ENCODE measurements at regions of chr10 and their contacts with region 1.

Region 1: GRCh38 chr10:103888113-103888841 is 29.7 kb downstream of the STN1 start:
- DNase-seq: peak; percentile 60
- ATAC-seq: peak; percentile 61

Region 2: GRCh38 chr10:103990121-103990520 is 101.8 kb after region 1 on chr10:
- intact Hi-C with region 1: loop called (anchors 10 kb)
- DNase-seq: no peak
- ATAC-seq: no peak

Region 3: GRCh38 chr10:104121520-104122224 is 233.4 kb after region 1 on chr10 and contains the start of gene SFR1:
- intact Hi-C with region 1: loop called (anchors 5 kb)
- DNase-seq: peak; percentile 100
- ATAC-seq: peak; percentile 97
- total RNA-seq, gene SFR1: 5.2 TPM

Region 4: GRCh38 chr10:104209575-104210198 is 321.4 kb after region 1 on chr10:
- intact Hi-C with region 1: loop called (anchors 5 kb)
- DNase-seq: no peak
- ATAC-seq: peak; percentile 63